Ascending aorta (tissue), 2 donors: ENCODE measurements at regions of chr12 and their contacts with region 1.

Region 1: GRCh38 chr12:107992870-107993451 is 136.1 kb upstream of the WSCD2 start:
- DNase-seq: no peak
- H3K4me3 ChIP-seq: no peak overlapping the region
- H3K27ac ChIP-seq: no peak overlapping the region
- H3K4me1 ChIP-seq: no peaks in the 10 kb centered on the region
- H3K27me3 ChIP-seq: no peaks in the 10 kb centered on the region
- CTCF ChIP-seq: peak in 2 of 3 experiments; percentile 19 to 35

Region 2: DNA sequence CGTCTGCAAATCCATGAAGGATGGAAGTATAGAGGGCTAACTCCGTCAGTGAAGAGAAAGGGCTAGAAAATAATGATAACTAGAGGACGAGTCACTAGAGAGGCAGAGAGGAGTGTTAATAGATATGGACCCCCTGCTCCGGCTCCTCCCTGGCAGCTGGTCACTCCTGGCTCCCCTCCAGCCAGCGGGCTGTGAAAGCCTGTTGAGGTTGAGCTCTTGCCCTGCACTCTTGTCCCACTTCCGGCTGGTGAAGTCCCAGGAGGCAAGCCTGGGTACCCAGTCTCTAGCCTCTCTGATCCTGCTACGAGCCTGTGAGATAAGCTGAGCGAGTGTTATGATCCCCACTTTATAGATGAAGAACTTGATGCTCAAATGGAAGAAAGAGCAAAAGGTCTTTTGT is 1319.8 kb before region 1 on chr12:
- intact Hi-C with region 1: loop called (anchors 10 kb)
- DNase-seq: no peak
- H3K4me3 ChIP-seq: no peak overlapping the region
- H3K27ac ChIP-seq: no peak overlapping the region
- H3K4me1 ChIP-seq: no peaks in the 10 kb centered on the region
- H3K27me3 ChIP-seq: no peaks in the 10 kb centered on the region
- CTCF ChIP-seq: no peak

Region 3: GRCh38 chr12:108029051-108029835 is 36.3 kb after region 1 on chr12:
- intact Hi-C with region 1: no loop called
- DNase-seq: no peak
- H3K4me3 ChIP-seq: no peak overlapping the region
- H3K27ac ChIP-seq: no peak overlapping the region
- H3K4me1 ChIP-seq: no peaks in the 10 kb centered on the region
- H3K27me3 ChIP-seq: no peaks in the 10 kb centered on the region
- CTCF ChIP-seq: no peak